ENCODE measurements at regions of chr6 and their contacts with region 1.

Region 1: DNA sequence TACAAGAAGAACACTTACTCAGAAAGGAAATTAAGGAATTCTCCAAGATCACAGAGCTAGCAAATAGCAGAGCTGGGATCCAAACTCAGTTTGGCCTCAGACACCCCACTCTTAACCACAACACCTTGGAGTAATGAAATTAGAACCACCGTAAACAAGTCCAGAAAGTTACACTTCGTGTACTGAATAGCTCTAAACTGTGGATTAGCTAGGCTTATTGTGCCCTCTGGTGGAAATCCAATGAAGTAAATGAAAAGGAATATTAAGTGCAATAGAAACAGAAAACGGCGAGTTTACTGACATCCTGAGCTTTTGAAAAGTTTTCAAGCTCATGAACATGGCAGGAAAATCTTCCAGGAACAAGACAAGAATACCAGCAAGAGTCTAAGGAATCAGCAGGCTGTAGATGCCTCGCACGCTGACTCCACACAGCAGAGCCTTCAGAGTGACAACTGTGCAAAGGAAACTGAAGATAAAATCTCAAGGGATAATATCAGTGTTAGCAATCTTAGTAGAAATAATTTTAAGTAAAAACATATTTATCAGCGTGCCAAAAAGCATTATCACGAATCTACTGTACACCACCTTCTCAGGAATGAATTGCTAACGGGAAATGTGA is 34.6 kb downstream of the FBXO5 start:
- DNase-seq: peak in 1 of 2 experiments; percentile 17
- H3K4me3 ChIP-seq: no peak overlapping the region
- H3K4me3 Mint-ChIP-seq: no peak overlapping the region
- H3K27ac Mint-ChIP-seq: no peak overlapping the region
- H3K4me1 ChIP-seq: no peaks in the 10 kb centered on the region
- H3K4me1 Mint-ChIP-seq: no peaks in the 10 kb centered on the region
- H3K27me3 ChIP-seq: no peaks in the 10 kb centered on the region
- H3K27me3 Mint-ChIP-seq: peaks cover 7% of the 10 kb centered on the region
- CTCF ChIP-seq: peak; percentile 46 to 63

Region 2: GRCh38 chr6:152750694-152751093 is 197.6 kb before region 1 on chr6 and contains the start of gene VIP:
- CTCF ChIA-PET with region 1: interaction called, 5 read pairs
- POLR2A ChIA-PET with region 1: no interaction called
- intact Hi-C with region 1: loop called (anchors 1 kb)
- DNase-seq: peak in 1 of 2 experiments; percentile 60
- H3K4me3 ChIP-seq: no peak within 1 kb of the TSS
- H3K4me3 Mint-ChIP-seq: no peak within 1 kb of the TSS
- H3K27ac Mint-ChIP-seq: no peak within 1 kb of the TSS
- H3K4me1 ChIP-seq: no peaks in the 10 kb centered on the region
- H3K4me1 Mint-ChIP-seq: no peaks in the 10 kb centered on the region
- H3K27me3 ChIP-seq: no peaks in the 10 kb centered on the region
- H3K27me3 Mint-ChIP-seq: no peaks in the 10 kb centered on the region
- CTCF ChIP-seq: no peak
- total RNA-seq, gene VIP: not detected in 2 replicates

Region 3: GRCh38 chr6:152897799-152898399 is 50.4 kb before region 1 on chr6:
- CTCF ChIA-PET with region 1: no interaction called
- POLR2A ChIA-PET with region 1: no interaction called
- intact Hi-C with region 1: loop called (anchors 5 kb)
- DNase-seq: peak; percentile 65 to 82
- H3K4me3 ChIP-seq: no peak overlapping the region
- H3K4me3 Mint-ChIP-seq: no peak overlapping the region
- H3K27ac Mint-ChIP-seq: no peak overlapping the region
- H3K4me1 ChIP-seq: no peaks in the 10 kb centered on the region
- H3K4me1 Mint-ChIP-seq: no peaks in the 10 kb centered on the region
- H3K27me3 ChIP-seq: no peaks in the 10 kb centered on the region
- H3K27me3 Mint-ChIP-seq: peaks cover 14% of the 10 kb centered on the region
- CTCF ChIP-seq: peak; percentile 79 to 88

Region 4: GRCh38 chr6:153312641-153313040 is 364.4 kb after region 1 on chr6:
- CTCF ChIA-PET with region 1: interaction called, 10 read pairs
- POLR2A ChIA-PET with region 1: no interaction called
- intact Hi-C with region 1: no loop called
- DNase-seq: peak in 1 of 2 experiments; percentile 37
- H3K4me3 ChIP-seq: no peak overlapping the region
- H3K4me3 Mint-ChIP-seq: no peak overlapping the region
- H3K27ac Mint-ChIP-seq: no peak overlapping the region
- H3K4me1 ChIP-seq: no peaks in the 10 kb centered on the region
- H3K4me1 Mint-ChIP-seq: no peaks in the 10 kb centered on the region
- H3K27me3 ChIP-seq: no peaks in the 10 kb centered on the region
- H3K27me3 Mint-ChIP-seq: peaks cover 11% of the 10 kb centered on the region
- CTCF ChIP-seq: peak; percentile 33 to 60